ENCODE measurements at regions of chr13 and their contacts with region 1.

Region 1: DNA sequence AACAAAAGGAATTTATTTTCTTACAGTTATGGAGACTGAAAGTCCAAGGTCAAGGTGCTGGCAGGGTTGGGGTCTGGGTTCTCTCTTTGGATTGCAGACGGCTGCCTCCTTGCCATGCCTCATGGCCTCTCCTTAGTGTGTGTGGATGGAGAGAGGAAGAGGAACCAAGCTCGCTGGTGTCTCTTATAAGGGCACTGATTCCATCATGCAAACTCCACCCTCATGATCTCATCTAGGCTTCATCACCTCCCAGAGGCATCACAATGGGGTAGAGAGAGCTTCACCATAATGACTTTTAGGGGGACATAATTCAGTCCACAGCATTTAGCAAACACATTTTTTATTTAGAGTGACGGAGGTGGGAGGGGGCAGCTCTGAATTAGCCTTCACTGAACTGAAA is 104.9 kb upstream of the ABCC4 start:
- DNase-seq: no peak
- H3K4me3 ChIP-seq: no peak overlapping the region
- H3K27ac ChIP-seq: no peak overlapping the region
- H3K4me1 ChIP-seq: peaks cover 0 to 13% (median 9%) of the 10 kb centered on the region in 4 donors
- H3K27me3 ChIP-seq: peaks cover 0 to 15% (median 0%) of the 10 kb centered on the region in 3 donors
- CTCF ChIP-seq: no peak
- EP300 ChIP-seq: no peak
- POLR2A ChIP-seq: no peak

Region 2: DNA sequence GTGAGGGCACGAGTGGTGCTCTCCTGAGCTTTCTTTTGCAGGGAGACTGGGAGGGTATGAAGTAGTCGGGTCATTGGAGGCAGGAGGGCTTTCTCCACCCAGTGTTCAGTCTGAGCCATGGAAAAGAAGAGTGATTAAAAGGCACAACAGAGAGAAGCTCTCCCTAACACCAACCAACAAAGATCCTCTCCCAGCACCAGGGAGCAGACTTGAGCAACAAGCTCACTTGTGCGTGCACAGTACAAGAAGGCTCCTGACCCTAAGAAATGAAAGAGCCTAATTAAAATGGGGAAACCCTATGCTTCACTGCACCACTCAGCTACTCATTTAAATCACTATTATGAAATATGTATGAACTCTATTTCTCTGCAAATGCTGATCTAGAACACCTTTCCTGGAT is 417.5 kb before region 1 on chr13:
- intact Hi-C with region 1: no loop called
- DNase-seq: no peak
- H3K4me3 ChIP-seq: no peak overlapping the region
- H3K27ac ChIP-seq: no peak overlapping the region
- H3K4me1 ChIP-seq: no peaks in the 10 kb centered on the region
- H3K27me3 ChIP-seq: peaks cover 0 to 12% (median 0%) of the 10 kb centered on the region in 3 donors
- CTCF ChIP-seq: no peak
- EP300 ChIP-seq: no peak
- POLR2A ChIP-seq: no peak

Region 3: GRCh38 chr13:95185851-95186250 is 220.3 kb before region 1 on chr13:
- intact Hi-C with region 1: loop called (anchors 5 kb)
- DNase-seq: peak in 1 of 2 donors; percentile 57
- H3K4me3 ChIP-seq: no peak overlapping the region
- H3K27ac ChIP-seq: no peak overlapping the region
- H3K4me1 ChIP-seq: peaks cover 0 to 16% (median 2%) of the 10 kb centered on the region in 4 donors
- H3K27me3 ChIP-seq: no peaks in the 10 kb centered on the region
- CTCF ChIP-seq: no peak
- EP300 ChIP-seq: no peak
- POLR2A ChIP-seq: no peak

Measured in stomach (tissue), 19 donors.